Caco-2 (cell line): ENCODE measurements at regions of chr13 and their contacts with region 1.

Region 1: GRCh38 chr13:77480066-77480465 is 55.4 kb upstream of the SCEL start:
- DNase-seq: no peak
- H3K4me3 ChIP-seq: no peak overlapping the region
- H3K4me3 Mint-ChIP-seq: no peak overlapping the region
- H3K27ac Mint-ChIP-seq: no peak overlapping the region
- H3K4me1 ChIP-seq: 0 out of 2 replicates have a peak, but pooled peaks cover 4% of the 10 kb centered on the region
- H3K4me1 Mint-ChIP-seq: no peaks in the 10 kb centered on the region
- H3K27me3 ChIP-seq: no peaks in the 10 kb centered on the region
- H3K27me3 Mint-ChIP-seq: peaks cover 8% of the 10 kb centered on the region
- CTCF ChIP-seq: no peak

Region 2: GRCh38 chr13:77056382-77056781 is 423.7 kb before region 1 on chr13:
- CTCF ChIA-PET with region 1: no interaction called
- POLR2A ChIA-PET with region 1: no interaction called
- intact Hi-C with region 1: loop called (anchors 10 kb)
- DNase-seq: no peak
- H3K4me3 ChIP-seq: no peak overlapping the region
- H3K4me3 Mint-ChIP-seq: no peak overlapping the region
- H3K27ac Mint-ChIP-seq: no peak overlapping the region
- H3K4me1 ChIP-seq: no peaks in the 10 kb centered on the region
- H3K4me1 Mint-ChIP-seq: peaks cover 5% of the 10 kb centered on the region
- H3K27me3 ChIP-seq: no peaks in the 10 kb centered on the region
- H3K27me3 Mint-ChIP-seq: no peaks in the 10 kb centered on the region
- CTCF ChIP-seq: no peak

Region 3: DNA sequence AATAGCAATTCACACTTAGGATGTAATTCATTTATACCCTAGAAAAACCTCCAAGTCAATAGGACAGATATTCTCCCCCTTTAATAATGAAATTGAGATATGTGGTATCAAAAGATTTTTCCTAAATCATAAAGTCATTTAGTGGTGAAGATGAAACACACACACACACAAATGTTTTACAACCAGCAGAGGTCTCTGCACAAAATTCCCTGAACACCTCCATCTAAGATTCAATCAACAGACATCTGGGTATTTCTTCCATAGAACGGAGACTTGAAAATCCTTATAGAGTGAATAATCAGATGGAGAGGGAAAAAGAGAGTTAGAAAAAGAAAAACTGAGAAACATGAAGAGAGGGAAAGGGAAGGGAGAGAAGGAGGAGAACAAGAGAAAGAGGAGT is 205.9 kb before region 1 on chr13:
- CTCF ChIA-PET with region 1: no interaction called
- POLR2A ChIA-PET with region 1: no interaction called
- intact Hi-C with region 1: loop called (anchors 2 kb)
- DNase-seq: no peak
- H3K4me3 ChIP-seq: no peak overlapping the region
- H3K4me3 Mint-ChIP-seq: no peak overlapping the region
- H3K27ac Mint-ChIP-seq: no peak overlapping the region
- H3K4me1 ChIP-seq: no peaks in the 10 kb centered on the region
- H3K4me1 Mint-ChIP-seq: no peaks in the 10 kb centered on the region
- H3K27me3 ChIP-seq: no peaks in the 10 kb centered on the region
- H3K27me3 Mint-ChIP-seq: no peaks in the 10 kb centered on the region
- CTCF ChIP-seq: no peak

Region 4: GRCh38 chr13:77329133-77329910 is 150.7 kb before region 1 on chr13:
- CTCF ChIA-PET with region 1: interaction called, 16 read pairs
- POLR2A ChIA-PET with region 1: no interaction called
- intact Hi-C with region 1: loop called (anchors 1 kb)
- DNase-seq: peak; percentile 85 to 88
- H3K4me3 ChIP-seq: peak overlapping the region; percentile 81
- H3K4me3 Mint-ChIP-seq: peak overlapping the region; percentile 90
- H3K27ac Mint-ChIP-seq: no peak overlapping the region
- H3K4me1 ChIP-seq: peaks cover 12% of the 10 kb centered on the region
- H3K4me1 Mint-ChIP-seq: peaks cover 8% of the 10 kb centered on the region
- H3K27me3 ChIP-seq: no peaks in the 10 kb centered on the region
- H3K27me3 Mint-ChIP-seq: peaks cover 10% of the 10 kb centered on the region
- CTCF ChIP-seq: no peak

Region 5: DNA sequence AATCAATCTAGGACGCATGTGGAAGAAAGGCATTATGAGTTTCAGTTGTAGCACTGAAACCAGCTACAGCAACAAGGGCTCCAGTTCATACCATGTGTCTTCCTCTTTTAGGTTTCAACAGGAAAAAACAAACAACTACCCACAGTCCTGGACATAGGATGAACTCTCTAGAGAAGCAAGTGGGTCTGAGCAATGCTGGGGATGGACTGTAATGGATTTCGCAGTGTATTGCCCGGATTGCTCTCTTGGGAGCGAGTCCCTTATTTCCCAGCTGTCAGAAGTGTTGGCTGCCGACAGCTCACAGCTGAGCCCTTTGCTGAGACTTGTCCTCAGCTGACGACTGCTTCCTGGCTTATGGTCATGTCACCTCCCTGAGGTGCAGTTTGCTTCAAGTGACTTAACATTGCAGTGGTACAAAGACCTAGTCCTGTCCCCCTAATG is 141.1 kb before region 1 on chr13:
- CTCF ChIA-PET with region 1: interaction called, 13 read pairs
- POLR2A ChIA-PET with region 1: no interaction called
- intact Hi-C with region 1: loop called (anchors 1 kb)
- DNase-seq: no peak
- H3K4me3 ChIP-seq: no peak overlapping the region
- H3K4me3 Mint-ChIP-seq: no peak overlapping the region
- H3K27ac Mint-ChIP-seq: no peak overlapping the region
- H3K4me1 ChIP-seq: no peaks in the 10 kb centered on the region
- H3K4me1 Mint-ChIP-seq: no peaks in the 10 kb centered on the region
- H3K27me3 ChIP-seq: no peaks in the 10 kb centered on the region; the same call in none of the 2 replicates
- H3K27me3 Mint-ChIP-seq: peaks cover 26% of the 10 kb centered on the region
- CTCF ChIP-seq: no peak

Region 6: GRCh38 chr13:77437267-77437666 is 42.8 kb before region 1 on chr13:
- CTCF ChIA-PET with region 1: no interaction called
- POLR2A ChIA-PET with region 1: no interaction called
- intact Hi-C with region 1: no loop called
- DNase-seq: peak in 1 of 2 experiments; percentile 20
- H3K4me3 ChIP-seq: no peak overlapping the region
- H3K4me3 Mint-ChIP-seq: no peak overlapping the region
- H3K27ac Mint-ChIP-seq: no peak overlapping the region
- H3K4me1 ChIP-seq: no peaks in the 10 kb centered on the region
- H3K4me1 Mint-ChIP-seq: no peaks in the 10 kb centered on the region
- H3K27me3 ChIP-seq: no peaks in the 10 kb centered on the region
- H3K27me3 Mint-ChIP-seq: peaks cover 13% of the 10 kb centered on the region
- CTCF ChIP-seq: no peak

Region 7: GRCh38 chr13:77565635-77566034 is 85.6 kb after region 1 on chr13:
- CTCF ChIA-PET with region 1: interaction called, 10 read pairs
- POLR2A ChIA-PET with region 1: no interaction called
- intact Hi-C with region 1: loop called (anchors 1 kb)
- DNase-seq: peak in 1 of 2 experiments; percentile 45
- H3K4me3 ChIP-seq: no peak overlapping the region
- H3K4me3 Mint-ChIP-seq: no peak overlapping the region
- H3K27ac Mint-ChIP-seq: no peak overlapping the region
- H3K4me1 ChIP-seq: no peaks in the 10 kb centered on the region
- H3K4me1 Mint-ChIP-seq: no peaks in the 10 kb centered on the region
- H3K27me3 ChIP-seq: no peaks in the 10 kb centered on the region
- H3K27me3 Mint-ChIP-seq: peaks cover 3% of the 10 kb centered on the region
- CTCF ChIP-seq: peak; percentile 59 to 65

Region 8: GRCh38 chr13:77623806-77624205 is 143.7 kb after region 1 on chr13:
- CTCF ChIA-PET with region 1: no interaction called
- POLR2A ChIA-PET with region 1: no interaction called
- intact Hi-C with region 1: no loop called
- DNase-seq: no peak
- H3K4me3 ChIP-seq: no peak overlapping the region
- H3K4me3 Mint-ChIP-seq: no peak overlapping the region
- H3K27ac Mint-ChIP-seq: no peak overlapping the region
- H3K4me1 ChIP-seq: no peaks in the 10 kb centered on the region
- H3K4me1 Mint-ChIP-seq: no peaks in the 10 kb centered on the region
- H3K27me3 ChIP-seq: no peaks in the 10 kb centered on the region
- H3K27me3 Mint-ChIP-seq: peaks cover 3% of the 10 kb centered on the region
- CTCF ChIP-seq: no peak